ENCODE measurements at regions of chr5 and their contacts with region 1.

Region 1: GRCh38 chr5:177133091-177133852 is at the start of gene NSD1:
- H3K4me3 Mint-ChIP-seq: peak within 1 kb of the TSS; percentile 81
- H3K27ac Mint-ChIP-seq: peak within 1 kb of the TSS; percentile 92
- H3K4me1 Mint-ChIP-seq: peaks cover 58% of the 10 kb centered on the region
- H3K27me3 Mint-ChIP-seq: peaks cover 5% of the 10 kb centered on the region

Region 2: GRCh38 chr5:177303121-177303924 is 170.1 kb after region 1 on chr5 and contains the starts of genes PRELID1 and RAB24:
- intact Hi-C with region 1: loop called (anchors 5 kb)
- H3K4me3 Mint-ChIP-seq: peak within 1 kb of the TSS; percentile 95
- H3K27ac Mint-ChIP-seq: peak within 1 kb of the TSS; percentile 86
- H3K4me1 Mint-ChIP-seq: peaks cover 87% of the 10 kb centered on the region
- H3K27me3 Mint-ChIP-seq: no peaks in the 10 kb centered on the region

Measured in dendritic cell treated with granulocyte-macrophage colony-stimulating factor and Interleukin-4, amounts not matched to agents 40 ng/mL and 50 ng/mL, for 4 days (primary cell).